ENCODE measurements at regions of chr4 and their contacts with region 1.

Region 1: GRCh38 chr4:110049951-110050925 is 137.6 kb downstream of the EGF start:
- DNase-seq: peak; percentile 19 to 80 (median 42)
- H3K4me3 ChIP-seq: no peak overlapping the region
- H3K27ac ChIP-seq: no peak overlapping the region
- H3K4me1 ChIP-seq: no peaks in the 10 kb centered on the region
- H3K27me3 ChIP-seq: no peaks in the 10 kb centered on the region
- CTCF ChIP-seq: peak; percentile 53 to 80 (median 74)
- POLR2A ChIP-seq: no peak

Region 2: GRCh38 chr4:110211007-110211769 is 160.9 kb after region 1 on chr4:
- intact Hi-C with region 1: loop called (anchors 5 kb)
- DNase-seq: peak; percentile 24 to 65 (median 40)
- H3K4me3 ChIP-seq: no peak overlapping the region
- H3K27ac ChIP-seq: no peak overlapping the region
- H3K4me1 ChIP-seq: no peaks in the 10 kb centered on the region
- H3K27me3 ChIP-seq: no peaks in the 10 kb centered on the region
- CTCF ChIP-seq: peak; percentile 66 to 88 (median 74)
- POLR2A ChIP-seq: no peak

Measured in adrenal gland (tissue), 19 donors.